ENCODE measurements at regions of chr20 and their contacts with region 1.

Region 1: DNA sequence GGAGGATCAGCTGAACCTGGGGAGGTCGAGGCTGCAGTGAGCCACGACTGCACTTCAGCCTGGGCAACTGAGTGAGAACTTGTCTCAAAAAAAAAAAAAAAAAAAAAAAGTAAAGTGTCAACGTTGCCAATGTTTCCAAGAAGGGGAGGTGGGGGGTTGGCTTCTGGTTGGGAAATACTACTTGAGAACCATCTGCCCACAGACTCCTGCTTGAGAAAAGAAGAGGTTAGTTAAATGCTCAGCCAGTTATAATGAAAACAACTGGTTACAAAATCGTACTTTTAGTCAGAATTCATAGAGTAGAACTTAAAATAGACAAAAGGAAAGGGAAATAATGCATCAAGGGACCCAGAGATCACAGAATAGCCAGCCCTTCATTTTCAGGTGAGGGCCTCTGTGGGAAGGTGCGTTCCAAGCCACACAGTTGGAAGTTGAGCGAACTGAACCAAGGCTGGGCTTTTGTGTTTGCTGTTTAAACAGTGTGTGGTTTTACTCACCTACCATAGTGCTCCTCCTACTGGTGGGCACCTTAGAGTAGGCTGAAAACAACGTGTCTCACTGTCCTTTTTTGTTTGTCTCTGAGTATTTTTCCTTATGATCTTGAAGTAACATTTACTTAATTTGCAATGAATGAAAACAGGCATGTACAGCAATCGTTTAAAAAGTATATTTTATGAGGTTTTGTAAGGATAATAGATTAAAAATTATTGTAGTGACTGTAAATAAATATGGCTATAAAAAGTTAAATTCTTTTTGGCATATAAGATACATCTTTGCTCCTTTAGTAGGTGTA is 200.7 kb downstream of the BCAS1 start:
- DNase-seq: peak in 8 of 9 donors; percentile 66 to 82 (median 76)
- ATAC-seq: peak; percentile 90
- H3K4me3 ChIP-seq: no peak overlapping the region
- H3K4me3 Mint-ChIP-seq: peak overlapping the region; percentile 11 to 85 (median 58)
- H3K27ac ChIP-seq: peak overlapping the region; percentile 60
- H3K27ac Mint-ChIP-seq: peak overlapping the region; percentile 79 to 97 (median 94)
- H3K4me1 ChIP-seq: peaks cover 64 to 73% of the 10 kb centered on the region in 2 donors
- H3K4me1 Mint-ChIP-seq: peaks cover 55 to 85% (median 73%) of the 10 kb centered on the region in 7 donors
- H3K27me3 ChIP-seq: no peaks in the 10 kb centered on the region
- H3K27me3 Mint-ChIP-seq: no peaks in the 10 kb centered on the region

Region 2: GRCh38 chr20:53611449-53611894 is 258.2 kb before region 1 on chr20:
- CTCF ChIA-PET with region 1: interaction called, 3 read pairs
- POLR2A ChIA-PET with region 1: interaction called, 14 read pairs
- intact Hi-C with region 1: no loop called
- DNase-seq: peak in 1 of 9 donors; percentile 15
- ATAC-seq: no peak
- H3K4me3 ChIP-seq: no peak overlapping the region
- H3K4me3 Mint-ChIP-seq: no peak overlapping the region
- H3K27ac ChIP-seq: peak overlapping the region; percentile 35
- H3K27ac Mint-ChIP-seq: peak overlapping the region in 8 of 9 donors; percentile 48 to 81 (median 76)
- H3K4me1 ChIP-seq: peaks cover 12 to 22% of the 10 kb centered on the region in 2 donors
- H3K4me1 Mint-ChIP-seq: peaks cover 10 to 46% (median 37%) of the 10 kb centered on the region in 7 donors
- H3K27me3 ChIP-seq: no peaks in the 10 kb centered on the region
- H3K27me3 Mint-ChIP-seq: no peaks in the 10 kb centered on the region

Region 3: DNA sequence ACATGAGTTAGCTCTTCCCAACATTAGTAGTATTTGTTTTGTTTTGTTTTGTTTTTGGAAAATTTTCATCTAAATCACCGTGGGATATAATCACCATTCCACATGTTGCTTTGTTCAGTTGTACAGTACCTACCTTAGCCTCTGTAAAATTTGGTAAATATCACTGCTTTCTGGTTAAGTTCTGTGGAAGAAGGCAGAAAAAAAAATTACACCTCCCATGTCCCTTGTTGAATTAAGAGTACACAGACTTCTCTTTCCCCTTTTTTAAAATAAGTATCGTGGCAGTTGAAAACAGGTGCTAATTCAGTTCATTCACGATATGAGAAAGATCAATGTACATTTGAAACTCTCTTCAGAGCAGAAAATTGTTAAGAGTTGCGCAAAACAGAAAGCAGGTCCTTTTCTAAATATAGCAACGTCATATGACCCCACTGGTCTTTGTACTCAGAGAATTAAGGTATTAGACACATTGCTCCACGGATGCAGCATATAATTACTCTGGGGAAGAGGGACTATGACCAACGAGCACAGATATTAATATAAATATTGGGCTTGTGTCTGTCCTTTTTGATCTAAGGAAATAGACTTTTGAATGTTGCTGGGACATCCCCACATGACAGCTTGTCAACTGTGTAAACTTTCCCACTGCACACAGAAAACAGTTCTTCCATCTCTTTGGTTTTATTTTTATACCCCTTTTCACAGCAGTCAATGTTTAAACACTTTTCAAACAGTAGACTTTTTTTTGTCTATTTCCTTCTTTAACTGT is 217.4 kb before region 1 on chr20:
- CTCF ChIA-PET with region 1: interaction called, 5 read pairs
- POLR2A ChIA-PET with region 1: interaction called, 3 read pairs
- intact Hi-C with region 1: loop called in 1 of 2 experiments (anchors 2 kb)
- DNase-seq: peak in 7 of 9 donors; percentile 34 to 61 (median 46)
- ATAC-seq: peak; percentile 85
- H3K4me3 ChIP-seq: peak overlapping the region; percentile 22
- H3K4me3 Mint-ChIP-seq: peak overlapping the region; percentile 25 to 86 (median 73)
- H3K27ac ChIP-seq: peak overlapping the region; percentile 72
- H3K27ac Mint-ChIP-seq: peak overlapping the region; percentile 88 to 97 (median 95)
- H3K4me1 ChIP-seq: peaks cover 21 to 32% of the 10 kb centered on the region in 2 donors
- H3K4me1 Mint-ChIP-seq: peaks cover 23 to 50% (median 43%) of the 10 kb centered on the region in 7 donors
- H3K27me3 ChIP-seq: no peaks in the 10 kb centered on the region
- H3K27me3 Mint-ChIP-seq: no peaks in the 10 kb centered on the region

Region 4: DNA sequence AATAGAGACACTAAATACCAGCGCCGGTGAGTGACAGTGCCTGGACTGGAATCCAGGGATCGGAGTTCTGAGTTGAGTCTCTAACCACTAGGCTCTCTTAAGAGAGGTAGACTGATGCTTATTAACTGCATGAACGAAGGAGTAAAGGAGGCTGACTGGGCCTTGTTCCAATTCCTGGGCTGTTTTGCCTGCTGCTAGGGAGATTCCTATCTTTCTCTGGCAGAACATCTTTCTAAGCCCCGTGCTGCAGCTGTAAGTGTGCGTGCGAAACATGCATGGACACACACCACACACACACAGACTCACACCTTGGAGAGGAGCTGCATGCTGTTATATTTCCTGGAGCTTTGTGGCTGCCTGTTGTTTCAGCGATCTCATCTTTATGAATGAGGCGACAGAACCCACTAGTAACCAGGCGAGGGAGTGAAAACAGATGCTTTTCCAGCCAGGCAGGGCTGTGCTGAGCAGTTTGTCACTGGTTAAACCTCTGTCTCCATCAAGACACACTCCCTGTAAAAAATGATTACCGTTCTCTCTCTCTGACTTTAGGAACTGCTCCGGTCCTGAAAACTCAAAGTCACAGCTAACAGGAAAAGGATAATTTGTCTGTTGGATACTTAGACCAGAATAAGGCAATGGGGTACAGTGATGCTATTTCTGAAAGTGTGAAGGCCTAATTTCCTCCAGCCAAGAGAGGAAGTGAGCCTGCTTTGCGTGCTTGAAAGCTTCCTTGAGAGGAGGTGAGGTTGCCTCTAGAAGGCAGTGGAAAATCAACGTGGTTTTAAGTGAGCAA is 118.6 kb before region 1 on chr20:
- CTCF ChIA-PET with region 1: interaction called, 5 read pairs
- POLR2A ChIA-PET with region 1: interaction called, 7 read pairs
- intact Hi-C with region 1: loop called (anchors 1 kb)
- DNase-seq: peak in 8 of 9 donors; percentile 21 to 60 (median 40)
- ATAC-seq: peak; percentile 61
- H3K4me3 ChIP-seq: no peak overlapping the region
- H3K4me3 Mint-ChIP-seq: peak overlapping the region; percentile 51 to 84 (median 68)
- H3K27ac ChIP-seq: peak overlapping the region; percentile 63
- H3K27ac Mint-ChIP-seq: peak overlapping the region; percentile 91 to 99 (median 96)
- H3K4me1 ChIP-seq: peaks cover 53 to 66% of the 10 kb centered on the region in 2 donors
- H3K4me1 Mint-ChIP-seq: peaks cover 45 to 77% (median 72%) of the 10 kb centered on the region in 7 donors
- H3K27me3 ChIP-seq: no peaks in the 10 kb centered on the region
- H3K27me3 Mint-ChIP-seq: no peaks in the 10 kb centered on the region

Region 5: GRCh38 chr20:53847129-53847836 is 22.4 kb before region 1 on chr20:
- CTCF ChIA-PET with region 1: interaction called, 5 read pairs
- POLR2A ChIA-PET with region 1: interaction called, 15 read pairs
- intact Hi-C with region 1: loop called (anchors 1 kb)
- DNase-seq: peak in 5 of 9 donors; percentile 31 to 57 (median 47)
- ATAC-seq: peak; percentile 72
- H3K4me3 ChIP-seq: no peak overlapping the region
- H3K4me3 Mint-ChIP-seq: peak overlapping the region; percentile 58 to 89 (median 78)
- H3K27ac ChIP-seq: peak overlapping the region; percentile 1
- H3K27ac Mint-ChIP-seq: peak overlapping the region; percentile 58 to 94 (median 88)
- H3K4me1 ChIP-seq: peaks cover 47 to 61% of the 10 kb centered on the region in 2 donors
- H3K4me1 Mint-ChIP-seq: peaks cover 43 to 77% (median 58%) of the 10 kb centered on the region in 7 donors
- H3K27me3 ChIP-seq: no peaks in the 10 kb centered on the region
- H3K27me3 Mint-ChIP-seq: no peaks in the 10 kb centered on the region

Region 6: DNA sequence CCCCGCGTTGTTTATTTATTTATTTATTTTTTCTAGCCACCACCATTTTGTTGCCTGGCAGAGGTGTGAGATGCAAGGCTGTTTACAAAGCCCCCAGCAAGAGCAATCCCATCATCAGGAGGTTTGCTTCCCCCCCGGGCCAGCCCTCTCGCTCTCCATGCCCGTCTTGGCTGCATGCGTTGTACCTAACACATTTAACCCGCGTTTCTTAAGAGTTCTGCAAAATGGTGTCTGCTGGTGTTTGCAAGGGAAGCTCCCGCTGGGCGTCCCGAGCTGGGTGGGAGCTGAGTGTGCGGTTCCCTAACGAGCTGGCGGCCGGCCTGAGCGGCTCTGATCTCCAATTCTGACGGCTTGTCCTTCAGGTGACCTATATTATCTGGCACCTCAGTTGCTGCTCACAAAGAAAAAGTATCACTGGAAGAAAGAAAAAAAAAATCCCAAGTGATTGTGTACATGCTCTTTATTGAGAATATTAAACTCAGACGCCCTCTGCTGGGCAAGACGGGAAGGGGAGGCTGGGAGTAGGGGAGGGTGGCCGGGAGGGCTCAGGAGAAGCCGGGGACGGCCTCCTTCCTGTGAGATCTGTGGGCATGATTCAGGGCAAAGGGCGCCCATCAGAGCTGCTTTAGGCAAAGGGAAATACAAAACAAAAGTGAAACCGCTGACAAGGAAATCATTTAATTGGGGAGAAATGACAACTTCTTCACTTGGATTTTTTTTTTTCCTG is 45.9 kb after region 1 on chr20:
- CTCF ChIA-PET with region 1: interaction called, 19 read pairs
- POLR2A ChIA-PET with region 1: interaction called, 13 read pairs
- intact Hi-C with region 1: loop called (anchors 1 kb)
- DNase-seq: peak; percentile 70 to 90 (median 88)
- ATAC-seq: peak; percentile 99
- H3K4me3 ChIP-seq: peak overlapping the region; percentile 79
- H3K4me3 Mint-ChIP-seq: peak overlapping the region; percentile 88 to 97 (median 94)
- H3K27ac ChIP-seq: peak overlapping the region; percentile 70
- H3K27ac Mint-ChIP-seq: peak overlapping the region; percentile 82 to 95 (median 90)
- H3K4me1 ChIP-seq: peaks cover 5 to 7% of the 10 kb centered on the region in 2 donors
- H3K4me1 Mint-ChIP-seq: peaks cover 15 to 37% (median 23%) of the 10 kb centered on the region in 7 donors
- H3K27me3 ChIP-seq: no peaks in the 10 kb centered on the region
- H3K27me3 Mint-ChIP-seq: no peaks in the 10 kb centered on the region

Region 7: GRCh38 chr20:53972179-53972696 is 102.6 kb after region 1 on chr20:
- CTCF ChIA-PET with region 1: no interaction called
- POLR2A ChIA-PET with region 1: no interaction called
- intact Hi-C with region 1: no loop called
- DNase-seq: no peak
- ATAC-seq: no peak
- H3K4me3 ChIP-seq: no peak overlapping the region
- H3K4me3 Mint-ChIP-seq: no peak overlapping the region
- H3K27ac ChIP-seq: no peak overlapping the region
- H3K27ac Mint-ChIP-seq: no peak overlapping the region
- H3K4me1 ChIP-seq: no peaks in the 10 kb centered on the region
- H3K4me1 Mint-ChIP-seq: no peaks in the 10 kb centered on the region
- H3K27me3 ChIP-seq: no peaks in the 10 kb centered on the region
- H3K27me3 Mint-ChIP-seq: peaks cover 0 to 10% (median 0%) of the 10 kb centered on the region in 5 donors

Region 8: GRCh38 chr20:54062812-54063280 is 193.2 kb after region 1 on chr20:
- CTCF ChIA-PET with region 1: no interaction called
- POLR2A ChIA-PET with region 1: no interaction called
- intact Hi-C with region 1: loop called in 1 of 2 experiments (anchors 1 kb)
- DNase-seq: peak in 6 of 9 donors; percentile 8 to 40 (median 26)
- ATAC-seq: peak; percentile 61
- H3K4me3 ChIP-seq: no peak overlapping the region
- H3K4me3 Mint-ChIP-seq: no peak overlapping the region
- H3K27ac ChIP-seq: no peak overlapping the region
- H3K27ac Mint-ChIP-seq: no peak overlapping the region
- H3K4me1 ChIP-seq: peaks cover 0 to 9% of the 10 kb centered on the region in 2 donors
- H3K4me1 Mint-ChIP-seq: peaks cover 0 to 11% (median 7%) of the 10 kb centered on the region in 7 donors
- H3K27me3 ChIP-seq: no peaks in the 10 kb centered on the region
- H3K27me3 Mint-ChIP-seq: no peaks in the 10 kb centered on the region